AG04450 (cell line): ENCODE measurements at regions of chr4 and their contacts with region 1.

Region 1: GRCh38 chr4:57037982-57038604 is 59.4 kb downstream of the POLR2B start:
- DNase-seq: no peak
- H3K4me3 ChIP-seq: no peak overlapping the region
- H3K27ac ChIP-seq: no peak overlapping the region
- H3K27me3 ChIP-seq: no peaks in the 10 kb centered on the region
- CTCF ChIP-seq: peak; percentile 98

Region 2: GRCh38 chr4:57020467-57021101 is 17.5 kb before region 1 on chr4:
- CTCF ChIA-PET with region 1: interaction called, 30 read pairs
- POLR2A ChIA-PET with region 1: no interaction called
- DNase-seq: peak; percentile 49
- H3K4me3 ChIP-seq: no peak overlapping the region
- H3K27ac ChIP-seq: no peak overlapping the region
- H3K27me3 ChIP-seq: no peaks in the 10 kb centered on the region
- CTCF ChIP-seq: no peak

Region 3: DNA sequence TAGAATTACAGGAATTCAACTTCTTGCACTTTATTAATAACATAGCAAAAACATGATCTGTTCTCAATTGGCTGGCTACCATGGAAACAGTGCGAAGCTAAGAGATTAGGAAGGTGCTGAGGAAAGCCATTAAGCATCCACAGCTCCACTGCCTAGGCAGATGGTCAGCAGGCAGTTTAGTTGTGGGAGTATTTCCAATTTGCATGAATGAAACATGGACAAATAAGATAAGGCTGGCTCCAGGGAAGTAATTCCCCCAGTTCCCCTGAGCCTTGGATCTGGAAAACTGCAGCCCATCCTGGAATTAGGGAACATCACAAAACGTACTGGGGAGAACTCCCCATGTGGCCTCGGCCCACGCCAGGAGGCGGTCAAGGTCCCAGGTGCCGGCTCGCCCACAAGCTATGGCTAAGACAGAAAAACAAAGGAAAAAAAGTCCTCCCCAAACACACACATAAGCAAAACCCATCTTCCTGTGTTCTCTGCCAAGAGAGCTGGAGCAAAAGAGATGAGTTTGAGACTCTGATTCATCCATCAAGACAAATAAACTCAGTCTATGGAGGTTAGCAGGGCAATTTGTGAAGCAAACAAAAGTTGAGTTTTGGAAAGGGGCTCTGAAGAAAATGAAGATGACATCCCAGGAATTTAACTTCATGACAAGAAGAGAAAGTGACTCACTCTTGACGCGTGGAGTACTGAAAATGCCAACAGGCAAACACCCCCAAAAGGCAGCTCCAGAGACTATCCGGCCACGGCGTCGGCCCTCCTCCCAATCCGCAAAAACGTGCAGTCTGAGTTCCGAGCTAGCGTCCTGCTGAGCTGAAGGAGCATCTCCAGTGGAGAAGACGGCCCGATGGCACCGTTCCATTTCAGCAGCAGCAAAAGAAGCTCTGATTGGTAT is 27.0 kb after region 1 on chr4:
- CTCF ChIA-PET with region 1: interaction called, 21 read pairs
- POLR2A ChIA-PET with region 1: no interaction called
- DNase-seq: peak; percentile 84
- H3K4me3 ChIP-seq: peak overlapping the region; percentile 31
- H3K27ac ChIP-seq: peak overlapping the region; percentile 88
- H3K27me3 ChIP-seq: no peaks in the 10 kb centered on the region
- CTCF ChIP-seq: no peak

Region 4: DNA sequence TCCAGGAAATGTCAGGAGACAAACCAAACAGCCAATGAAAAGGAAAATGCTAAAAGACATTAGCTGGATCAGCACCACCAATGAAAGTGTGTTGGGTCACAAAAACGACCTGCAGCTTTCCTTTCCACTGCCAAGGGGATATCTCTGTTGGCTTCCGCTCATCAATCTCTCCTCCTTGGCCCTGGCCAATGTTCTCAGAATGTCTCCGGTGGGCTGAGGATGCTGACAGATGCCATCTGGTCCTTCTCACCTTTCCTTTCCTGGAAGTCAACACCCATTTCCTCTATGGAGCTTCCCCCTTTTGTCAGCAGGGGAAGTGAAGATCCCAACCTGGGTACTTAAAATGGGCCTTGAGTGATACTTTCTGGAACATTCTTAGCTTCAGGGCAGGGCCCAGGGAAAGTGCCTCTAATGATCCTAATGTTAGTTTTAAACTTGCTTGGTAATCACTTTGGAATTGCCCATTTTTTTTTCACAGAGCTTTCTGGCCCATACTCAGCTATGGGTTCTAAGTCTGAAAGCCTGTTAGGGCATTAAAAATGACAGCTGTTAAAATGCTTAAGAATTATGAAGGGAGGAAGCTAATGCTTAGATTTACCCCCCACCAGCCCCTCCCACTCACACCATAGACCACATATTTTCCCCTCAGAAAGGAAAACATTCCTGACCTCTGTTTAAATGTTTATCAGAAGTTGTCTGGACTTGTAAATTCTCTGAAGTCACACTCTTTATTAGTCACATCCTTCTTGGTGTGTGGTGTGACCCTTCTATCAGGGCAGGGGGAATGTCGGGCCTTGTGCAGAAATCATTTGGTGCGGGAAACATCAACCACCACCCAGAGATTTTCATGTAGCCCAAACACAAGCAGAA is 42.9 kb after region 1 on chr4:
- CTCF ChIA-PET with region 1: interaction called, 11 read pairs
- POLR2A ChIA-PET with region 1: interaction called, 3 read pairs
- DNase-seq: peak; percentile 91
- H3K4me3 ChIP-seq: no peak overlapping the region
- H3K27ac ChIP-seq: peak overlapping the region; percentile 91
- H3K27me3 ChIP-seq: no peaks in the 10 kb centered on the region
- CTCF ChIP-seq: no peak

Region 5: GRCh38 chr4:57102050-57102624 is 64.0 kb after region 1 on chr4:
- CTCF ChIA-PET with region 1: interaction called, 18 read pairs
- POLR2A ChIA-PET with region 1: interaction called, 3 read pairs
- DNase-seq: peak; percentile 68
- H3K4me3 ChIP-seq: no peak overlapping the region
- H3K27ac ChIP-seq: peak overlapping the region; percentile 69
- H3K27me3 ChIP-seq: no peaks in the 10 kb centered on the region
- CTCF ChIP-seq: no peak

Region 6: GRCh38 chr4:57119054-57119651 is 81.1 kb after region 1 on chr4:
- CTCF ChIA-PET with region 1: interaction called, 11 read pairs
- POLR2A ChIA-PET with region 1: no interaction called
- DNase-seq: peak; percentile 74
- H3K4me3 ChIP-seq: peak overlapping the region; percentile 50
- H3K27ac ChIP-seq: peak overlapping the region; percentile 95
- H3K27me3 ChIP-seq: no peaks in the 10 kb centered on the region
- CTCF ChIP-seq: no peak

Region 7: DNA sequence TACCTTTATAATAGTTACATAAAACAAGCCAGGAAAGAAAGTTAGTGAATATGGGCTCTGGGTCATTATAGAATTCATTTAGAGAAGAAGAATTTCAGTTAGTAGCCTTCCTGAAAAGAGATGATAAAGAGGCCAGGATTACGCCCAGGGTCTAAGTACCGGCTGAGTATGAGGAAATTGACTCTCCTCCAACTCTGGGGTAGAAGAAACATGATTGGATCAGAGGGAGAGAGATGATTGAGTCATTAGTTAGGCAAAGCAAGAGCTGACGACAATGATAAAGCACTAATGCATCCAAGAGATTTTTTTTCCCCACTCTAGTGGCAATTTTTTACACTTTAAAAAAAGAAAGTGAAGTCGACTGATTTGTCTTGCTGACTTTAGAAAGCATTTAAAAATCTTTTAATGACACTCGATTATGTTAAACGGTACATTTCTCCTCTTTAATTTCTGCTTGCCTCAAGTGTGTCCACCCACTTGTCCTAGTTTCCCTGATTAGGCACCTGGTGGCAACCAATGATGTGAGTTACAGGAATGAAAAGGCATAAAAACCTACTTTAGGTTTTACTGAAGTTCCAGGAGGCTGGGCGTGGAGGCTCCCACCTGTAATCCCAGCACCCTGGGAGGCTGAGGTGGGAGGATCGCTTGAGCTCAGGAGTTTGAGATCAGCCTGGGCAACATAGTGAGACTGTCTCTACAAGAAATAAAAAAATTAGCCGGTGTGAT is 109.4 kb after region 1 on chr4:
- CTCF ChIA-PET with region 1: interaction called, 10 read pairs
- POLR2A ChIA-PET with region 1: no interaction called
- DNase-seq: no peak
- H3K4me3 ChIP-seq: no peak overlapping the region
- H3K27ac ChIP-seq: no peak overlapping the region
- H3K27me3 ChIP-seq: no peaks in the 10 kb centered on the region
- CTCF ChIP-seq: no peak